CD8-positive, alpha-beta T cell (primary cell): ENCODE measurements at regions of chr12 and their contacts with region 1.

Region 1: GRCh38 chr12:53190108-53190729 is 9.5 kb upstream of the CSAD start:
- DNase-seq: peak in 8 of 9 experiments; percentile 32 to 71 (median 66)
- ATAC-seq: peak; percentile 99
- H3K4me3 ChIP-seq: no peak overlapping the region
- H3K4me3 Mint-ChIP-seq: no peak overlapping the region
- H3K27ac ChIP-seq: peak overlapping the region in 1 of 2 experiments; percentile 29
- H3K27ac Mint-ChIP-seq: peak overlapping the region; percentile 66
- H3K4me1 ChIP-seq: peaks cover 10% of the 10 kb centered on the region
- H3K4me1 Mint-ChIP-seq: peaks cover 30% of the 10 kb centered on the region
- H3K27me3 ChIP-seq: no peaks in the 10 kb centered on the region
- H3K27me3 Mint-ChIP-seq: no peaks in the 10 kb centered on the region
- CTCF ChIP-seq: peak; percentile 47

Region 2: GRCh38 chr12:52243856-52244614 is 946.2 kb before region 1 on chr12:
- CTCF ChIA-PET with region 1: no interaction called
- POLR2A ChIA-PET with region 1: no interaction called
- intact Hi-C with region 1: no loop called
- DNase-seq: peak; percentile 18 to 78 (median 58)
- ATAC-seq: peak; percentile 88
- H3K4me3 ChIP-seq: no peak overlapping the region
- H3K4me3 Mint-ChIP-seq: no peak overlapping the region
- H3K27ac ChIP-seq: no peak overlapping the region
- H3K27ac Mint-ChIP-seq: peak overlapping the region; percentile 28
- H3K4me1 ChIP-seq: peaks cover 11% of the 10 kb centered on the region
- H3K4me1 Mint-ChIP-seq: peaks cover 12% of the 10 kb centered on the region
- H3K27me3 ChIP-seq: no peaks in the 10 kb centered on the region
- H3K27me3 Mint-ChIP-seq: peaks cover 20% of the 10 kb centered on the region
- CTCF ChIP-seq: no peak

Region 3: GRCh38 chr12:53200458-53201176 is 10.4 kb after region 1 on chr12:
- CTCF ChIA-PET with region 1: interaction called, 10 read pairs
- POLR2A ChIA-PET with region 1: interaction called, 10 read pairs
- intact Hi-C with region 1: loop called in 1 of 2 experiments (anchors 2 kb)
- DNase-seq: peak in 3 of 9 experiments; percentile 31 to 63 (median 49)
- ATAC-seq: peak; percentile 41
- H3K4me3 ChIP-seq: peak overlapping the region in 1 of 2 experiments; percentile 7
- H3K4me3 Mint-ChIP-seq: peak overlapping the region; percentile 73
- H3K27ac ChIP-seq: peak overlapping the region; percentile 14 to 30
- H3K27ac Mint-ChIP-seq: peak overlapping the region; percentile 93
- H3K4me1 ChIP-seq: peaks cover 89% of the 10 kb centered on the region
- H3K4me1 Mint-ChIP-seq: peaks cover 72% of the 10 kb centered on the region
- H3K27me3 ChIP-seq: no peaks in the 10 kb centered on the region
- H3K27me3 Mint-ChIP-seq: no peaks in the 10 kb centered on the region
- CTCF ChIP-seq: no peak

Region 4: GRCh38 chr12:53205747-53206419 is 15.7 kb after region 1 on chr12:
- CTCF ChIA-PET with region 1: interaction called, 5 read pairs
- POLR2A ChIA-PET with region 1: interaction called, 20 read pairs
- intact Hi-C with region 1: loop called in 1 of 2 experiments (anchors 2 kb)
- DNase-seq: peak in 8 of 9 experiments; percentile 43 to 74 (median 69)
- ATAC-seq: peak; percentile 53
- H3K4me3 ChIP-seq: peak overlapping the region; percentile 68 to 71
- H3K4me3 Mint-ChIP-seq: peak overlapping the region; percentile 84
- H3K27ac ChIP-seq: peak overlapping the region; percentile 48 to 71
- H3K27ac Mint-ChIP-seq: peak overlapping the region; percentile 90
- H3K4me1 ChIP-seq: peaks cover 70% of the 10 kb centered on the region
- H3K4me1 Mint-ChIP-seq: peaks cover 71% of the 10 kb centered on the region
- H3K27me3 ChIP-seq: no peaks in the 10 kb centered on the region
- H3K27me3 Mint-ChIP-seq: no peaks in the 10 kb centered on the region
- CTCF ChIP-seq: no peak

Region 5: GRCh38 chr12:53530920-53531319 is 340.7 kb after region 1 on chr12:
- CTCF ChIA-PET with region 1: no interaction called
- POLR2A ChIA-PET with region 1: no interaction called
- intact Hi-C with region 1: no loop called
- DNase-seq: no peak
- ATAC-seq: no peak
- H3K4me3 ChIP-seq: no peak overlapping the region
- H3K4me3 Mint-ChIP-seq: no peak overlapping the region
- H3K27ac ChIP-seq: no peak overlapping the region
- H3K27ac Mint-ChIP-seq: no peak overlapping the region
- H3K4me1 ChIP-seq: no peaks in the 10 kb centered on the region
- H3K4me1 Mint-ChIP-seq: no peaks in the 10 kb centered on the region
- H3K27me3 ChIP-seq: no peaks in the 10 kb centered on the region
- H3K27me3 Mint-ChIP-seq: no peaks in the 10 kb centered on the region
- CTCF ChIP-seq: no peak